CD4-positive, alpha-beta T cell (primary cell): ENCODE measurements at regions of chr6 and their contacts with region 1.

Region 1: GRCh38 chr6:151400454-151400853 is 9.1 kb upstream of the ZBTB2 start:
- DNase-seq: no peak
- ATAC-seq: no peak
- H3K4me3 ChIP-seq: no peak overlapping the region
- H3K4me3 Mint-ChIP-seq: peak overlapping the region; percentile 15
- H3K27ac ChIP-seq: no peak overlapping the region
- H3K27ac Mint-ChIP-seq: peak overlapping the region; percentile 76
- H3K4me1 ChIP-seq: peaks cover 38% of the 10 kb centered on the region
- H3K4me1 Mint-ChIP-seq: peaks cover 71% of the 10 kb centered on the region
- H3K27me3 ChIP-seq: no peaks in the 10 kb centered on the region
- H3K27me3 Mint-ChIP-seq: no peaks in the 10 kb centered on the region
- CTCF ChIP-seq: no peak

Region 2: DNA sequence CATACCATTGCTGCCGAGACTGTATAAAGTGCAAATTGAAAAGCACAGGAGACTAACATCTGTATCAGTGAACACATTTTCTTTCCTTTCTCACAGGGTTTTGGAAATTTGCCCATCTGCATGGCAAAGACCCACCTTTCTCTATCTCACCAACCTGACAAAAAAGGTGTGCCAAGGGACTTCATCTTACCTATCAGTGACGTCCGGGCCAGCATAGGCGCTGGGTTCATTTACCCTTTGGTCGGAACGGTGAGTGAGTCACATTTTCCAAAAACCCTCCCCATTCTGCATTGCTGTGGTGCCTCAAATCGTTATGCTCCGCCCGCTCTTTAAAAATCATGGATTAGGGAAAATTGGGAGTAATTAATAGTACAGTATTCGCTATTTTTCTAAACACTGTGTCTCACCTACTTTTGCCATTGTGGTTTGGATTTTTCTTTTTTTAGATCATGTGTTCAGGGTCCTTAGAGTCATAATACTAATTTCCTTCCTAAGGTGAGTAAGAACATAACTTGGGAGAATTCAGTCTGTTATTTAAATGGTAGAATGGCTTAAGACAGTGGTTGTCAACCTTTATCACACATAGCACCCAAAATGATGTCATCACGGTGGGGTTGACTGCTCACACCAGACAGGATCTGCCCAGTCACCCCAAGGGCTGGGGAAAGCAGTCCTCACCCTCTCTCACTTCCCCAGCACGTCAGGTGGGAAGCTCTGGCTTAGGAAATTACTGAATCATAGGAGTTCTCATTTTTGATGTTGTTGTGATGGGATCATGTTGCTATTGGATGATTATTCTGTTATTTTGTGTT is 363.4 kb before region 1 on chr6:
- CTCF ChIA-PET with region 1: no interaction called
- POLR2A ChIA-PET with region 1: no interaction called
- intact Hi-C with region 1: no loop called
- DNase-seq: peak in 2 of 14 experiments; percentile 51 to 67
- ATAC-seq: no peak
- H3K4me3 ChIP-seq: no peak overlapping the region
- H3K4me3 Mint-ChIP-seq: no peak overlapping the region
- H3K27ac ChIP-seq: no peak overlapping the region
- H3K27ac Mint-ChIP-seq: no peak overlapping the region
- H3K4me1 ChIP-seq: no peaks in the 10 kb centered on the region
- H3K4me1 Mint-ChIP-seq: no peaks in the 10 kb centered on the region
- H3K27me3 ChIP-seq: no peaks in the 10 kb centered on the region
- H3K27me3 Mint-ChIP-seq: no peaks in the 10 kb centered on the region
- CTCF ChIP-seq: no peak

Region 3: DNA sequence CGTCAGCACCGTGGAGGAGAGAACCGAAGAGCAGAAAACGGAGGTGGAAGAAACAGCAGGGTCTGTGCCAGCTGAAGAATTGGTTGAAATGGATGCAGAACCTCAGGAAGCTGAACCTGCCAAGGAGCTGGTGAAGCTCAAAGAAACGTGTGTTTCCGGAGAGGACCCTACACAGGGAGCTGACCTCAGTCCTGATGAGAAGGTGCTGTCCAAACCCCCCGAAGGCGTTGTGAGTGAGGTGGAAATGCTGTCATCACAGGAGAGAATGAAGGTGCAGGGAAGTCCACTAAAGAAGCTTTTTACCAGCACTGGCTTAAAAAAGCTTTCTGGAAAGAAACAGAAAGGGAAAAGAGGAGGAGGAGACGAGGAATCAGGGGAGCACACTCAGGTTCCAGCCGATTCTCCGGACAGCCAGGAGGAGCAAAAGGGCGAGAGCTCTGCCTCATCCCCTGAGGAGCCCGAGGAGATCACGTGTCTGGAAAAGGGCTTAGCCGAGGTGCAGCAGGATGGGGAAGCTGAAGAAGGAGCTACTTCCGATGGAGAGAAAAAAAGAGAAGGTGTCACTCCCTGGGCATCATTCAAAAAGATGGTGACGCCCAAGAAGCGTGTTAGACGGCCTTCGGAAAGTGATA is 50.7 kb before region 1 on chr6:
- CTCF ChIA-PET with region 1: interaction called, 3 read pairs
- POLR2A ChIA-PET with region 1: no interaction called
- intact Hi-C with region 1: loop called in 1 of 2 experiments (anchors 5 kb)
- DNase-seq: no peak
- ATAC-seq: no peak
- H3K4me3 ChIP-seq: no peak overlapping the region
- H3K4me3 Mint-ChIP-seq: no peak overlapping the region
- H3K27ac ChIP-seq: no peak overlapping the region
- H3K27ac Mint-ChIP-seq: no peak overlapping the region
- H3K4me1 ChIP-seq: peaks cover 11% of the 10 kb centered on the region
- H3K4me1 Mint-ChIP-seq: no peaks in the 10 kb centered on the region
- H3K27me3 ChIP-seq: no peaks in the 10 kb centered on the region
- H3K27me3 Mint-ChIP-seq: no peaks in the 10 kb centered on the region
- CTCF ChIP-seq: no peak

Region 4: DNA sequence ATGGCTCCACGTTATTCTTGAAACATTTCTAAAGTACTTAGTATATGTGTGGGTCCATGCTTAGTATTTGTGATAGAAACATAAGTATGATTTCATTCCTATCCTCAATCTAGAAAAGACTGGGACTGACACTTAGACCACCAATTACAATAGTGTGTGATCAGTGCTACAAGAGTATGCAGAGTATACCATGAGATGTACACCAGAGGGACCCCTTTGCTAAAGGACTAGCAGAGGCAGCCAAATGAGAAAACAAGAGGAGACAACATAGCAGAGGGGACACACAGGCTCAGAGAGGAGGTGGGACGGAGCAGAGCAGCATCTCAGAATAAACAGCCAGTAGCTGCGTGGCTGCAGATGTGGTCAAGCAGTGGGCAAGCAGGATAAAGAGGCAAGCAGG is 30.4 kb after region 1 on chr6:
- CTCF ChIA-PET with region 1: interaction called, 4 read pairs
- POLR2A ChIA-PET with region 1: no interaction called
- intact Hi-C with region 1: loop called in 1 of 2 experiments (anchors 5 kb)
- DNase-seq: no peak
- ATAC-seq: no peak
- H3K4me3 ChIP-seq: no peak overlapping the region
- H3K4me3 Mint-ChIP-seq: no peak overlapping the region
- H3K27ac ChIP-seq: no peak overlapping the region
- H3K27ac Mint-ChIP-seq: no peak overlapping the region
- H3K4me1 ChIP-seq: no peaks in the 10 kb centered on the region
- H3K4me1 Mint-ChIP-seq: no peaks in the 10 kb centered on the region
- H3K27me3 ChIP-seq: no peaks in the 10 kb centered on the region
- H3K27me3 Mint-ChIP-seq: no peaks in the 10 kb centered on the region
- CTCF ChIP-seq: no peak

Region 5: DNA sequence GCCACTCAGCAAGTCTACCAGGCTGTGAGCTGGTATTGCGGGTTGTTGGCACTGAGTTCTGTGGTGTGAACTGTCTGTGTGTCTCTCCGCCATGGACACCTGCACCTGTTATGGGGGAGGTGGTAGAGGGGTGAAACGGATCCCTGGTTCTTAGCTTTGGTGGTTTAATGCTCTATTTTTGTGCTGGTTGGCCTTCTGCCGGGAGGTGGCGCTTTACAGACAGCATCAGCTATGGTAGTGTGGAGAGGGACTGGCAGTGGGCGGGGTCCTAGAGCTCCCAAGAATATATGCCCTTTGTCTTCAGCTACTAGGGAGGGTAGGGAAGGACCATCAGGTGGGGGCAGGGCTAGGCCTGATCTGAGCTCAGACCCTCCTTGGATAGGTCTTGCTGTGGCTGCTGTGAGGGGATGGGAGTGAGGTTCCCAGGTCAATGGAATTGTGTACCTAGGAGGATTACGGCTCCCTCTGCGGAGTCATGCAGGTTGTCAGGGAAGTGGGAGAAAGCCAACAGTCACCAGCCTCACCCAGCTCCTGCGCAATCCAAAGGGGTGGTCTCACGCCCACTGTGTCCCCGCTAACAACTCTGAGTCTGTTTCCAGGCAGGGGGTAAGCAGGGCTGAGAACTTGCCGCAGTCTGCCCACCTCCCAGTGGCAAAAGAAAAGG is 247.7 kb after region 1 on chr6:
- CTCF ChIA-PET with region 1: no interaction called
- POLR2A ChIA-PET with region 1: no interaction called
- intact Hi-C with region 1: no loop called
- DNase-seq: peak in 1 of 14 experiments; percentile 1
- ATAC-seq: no peak
- H3K4me3 ChIP-seq: no peak overlapping the region
- H3K4me3 Mint-ChIP-seq: no peak overlapping the region
- H3K27ac ChIP-seq: no peak overlapping the region
- H3K27ac Mint-ChIP-seq: no peak overlapping the region
- H3K4me1 ChIP-seq: no peaks in the 10 kb centered on the region
- H3K4me1 Mint-ChIP-seq: no peaks in the 10 kb centered on the region
- H3K27me3 ChIP-seq: peaks cover 0 to 4% of the 10 kb centered on the region in 2 experiments
- H3K27me3 Mint-ChIP-seq: peaks cover 55% of the 10 kb centered on the region
- CTCF ChIP-seq: no peak

Region 6: DNA sequence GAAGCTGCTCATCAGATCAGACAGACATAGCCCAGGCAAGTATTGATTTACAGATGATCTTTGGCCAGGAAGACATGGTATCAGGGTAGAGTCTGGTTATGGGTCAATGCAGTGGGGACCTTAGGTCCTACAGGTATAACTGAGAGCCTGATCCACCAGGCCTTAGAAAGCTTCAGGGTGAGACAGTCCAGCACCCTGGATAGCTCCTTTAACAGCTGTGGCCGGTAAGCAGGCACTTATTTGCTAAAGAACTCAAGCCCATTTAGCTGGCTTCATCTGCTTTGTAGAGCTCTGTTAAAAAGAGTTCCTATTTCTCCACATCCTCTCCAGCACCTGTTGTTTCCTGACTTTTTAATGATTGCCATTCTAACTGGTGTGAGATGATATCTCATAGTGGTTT is 446.6 kb after region 1 on chr6:
- CTCF ChIA-PET with region 1: no interaction called
- POLR2A ChIA-PET with region 1: no interaction called
- intact Hi-C with region 1: no loop called
- DNase-seq: no peak
- ATAC-seq: no peak
- H3K4me3 ChIP-seq: no peak overlapping the region
- H3K4me3 Mint-ChIP-seq: no peak overlapping the region
- H3K27ac ChIP-seq: no peak overlapping the region
- H3K27ac Mint-ChIP-seq: no peak overlapping the region
- H3K4me1 ChIP-seq: no peaks in the 10 kb centered on the region
- H3K4me1 Mint-ChIP-seq: no peaks in the 10 kb centered on the region
- H3K27me3 ChIP-seq: no peaks in the 10 kb centered on the region
- H3K27me3 Mint-ChIP-seq: no peaks in the 10 kb centered on the region
- CTCF ChIP-seq: no peak